ENCODE measurements at regions of chr12 and their contacts with region 1.

Region 1: DNA sequence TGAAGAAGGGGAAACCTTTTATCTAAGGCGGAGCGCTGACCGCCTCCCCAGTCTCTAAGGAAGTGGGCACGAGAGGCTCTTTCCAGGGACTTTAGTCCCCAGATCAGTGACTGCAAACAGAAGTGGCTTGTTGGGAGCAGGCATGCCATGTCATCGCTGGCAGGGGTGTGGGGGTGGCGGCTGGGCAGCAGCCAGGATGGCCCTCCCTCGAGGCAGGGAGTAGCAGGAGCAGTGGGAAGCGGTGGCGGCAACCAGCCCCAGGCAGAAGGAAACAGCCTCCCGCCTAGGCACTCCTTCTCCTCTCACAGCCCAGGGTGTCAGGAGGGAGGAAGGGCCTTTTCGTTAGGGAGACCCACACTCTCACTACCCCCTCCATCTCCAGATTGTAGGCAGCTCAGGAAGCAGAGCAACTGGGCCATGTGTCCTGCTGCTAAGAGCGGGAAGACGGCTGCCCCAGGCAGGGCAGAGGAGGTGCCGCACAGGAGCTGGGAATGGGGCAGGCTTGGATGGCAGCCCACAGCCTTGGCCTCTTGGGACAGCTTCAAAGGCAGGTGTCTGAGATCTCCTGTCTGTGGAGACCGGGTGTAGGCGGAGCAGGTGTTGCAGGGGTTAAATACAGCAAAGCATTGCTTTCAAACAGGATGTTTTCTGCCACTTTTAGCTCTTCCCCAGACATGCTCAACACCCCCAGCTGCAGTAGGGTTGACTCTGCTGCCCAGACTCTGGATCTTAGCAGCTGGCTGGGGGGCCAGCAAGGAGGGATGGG is 21.8 kb downstream of the VDR start:
- DNase-seq: peak; percentile 63
- ATAC-seq: peak; percentile 51
- H3K4me3 Mint-ChIP-seq: peak overlapping the region; percentile 73
- H3K27ac Mint-ChIP-seq: peak overlapping the region; percentile 91
- H3K4me1 Mint-ChIP-seq: peaks cover 71% of the 10 kb centered on the region
- H3K27me3 Mint-ChIP-seq: no peaks in the 10 kb centered on the region

Region 2: DNA sequence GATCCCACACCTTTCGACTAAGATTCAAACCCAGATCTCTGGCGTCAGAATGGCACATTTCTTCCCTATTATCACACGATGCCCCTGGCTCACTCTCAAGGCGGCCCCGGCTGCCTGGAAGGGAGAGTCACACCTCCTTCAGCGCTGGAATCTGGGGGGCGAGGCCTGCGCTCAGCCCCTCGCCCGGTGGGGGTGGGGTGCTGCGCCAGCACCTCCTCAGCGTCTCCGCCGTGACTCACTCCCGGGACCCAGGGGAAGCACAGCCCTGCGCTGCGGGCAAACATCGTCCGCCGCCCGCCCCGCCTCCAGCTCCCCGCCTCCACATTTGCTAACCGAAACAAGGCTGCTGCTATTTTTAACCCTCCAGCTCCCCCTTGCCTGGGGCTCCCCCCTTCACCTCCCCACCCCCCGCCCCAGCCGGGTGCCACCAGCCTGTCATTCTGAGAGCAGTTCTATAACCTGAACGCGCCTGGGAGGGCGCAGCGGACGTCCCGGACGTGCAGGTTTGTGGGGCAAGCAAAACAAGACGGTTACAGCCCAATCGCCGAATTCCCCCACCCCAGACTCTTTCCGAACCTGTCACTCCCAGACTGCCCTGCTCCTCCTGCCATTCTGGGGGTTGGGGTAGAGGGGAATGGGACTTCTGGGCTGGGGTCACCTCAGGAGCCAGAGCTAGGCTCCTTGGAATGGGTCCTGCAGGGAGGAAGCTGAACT is 70.0 kb before region 1 on chr12:
- CTCF ChIA-PET with region 1: interaction called, 15 read pairs
- POLR2A ChIA-PET with region 1: interaction called, 13 read pairs
- DNase-seq: peak; percentile 96
- ATAC-seq: peak; percentile 61
- H3K4me3 Mint-ChIP-seq: peak overlapping the region; percentile 90
- H3K27ac Mint-ChIP-seq: peak overlapping the region; percentile 90
- H3K4me1 Mint-ChIP-seq: peaks cover 97% of the 10 kb centered on the region
- H3K27me3 Mint-ChIP-seq: no peaks in the 10 kb centered on the region

Region 3: GRCh38 chr12:47828608-47829536 is 54.1 kb before region 1 on chr12:
- CTCF ChIA-PET with region 1: interaction called, 15 read pairs
- POLR2A ChIA-PET with region 1: interaction called, 4 read pairs
- DNase-seq: no peak
- ATAC-seq: no peak
- H3K4me3 Mint-ChIP-seq: no peak overlapping the region
- H3K27ac Mint-ChIP-seq: peak overlapping the region; percentile 71
- H3K4me1 Mint-ChIP-seq: peaks cover 90% of the 10 kb centered on the region
- H3K27me3 Mint-ChIP-seq: no peaks in the 10 kb centered on the region

Region 4: GRCh38 chr12:47863467-47863866 is 19.5 kb before region 1 on chr12:
- CTCF ChIA-PET with region 1: interaction called, 58 read pairs
- POLR2A ChIA-PET with region 1: interaction called, 5 read pairs
- DNase-seq: no peak
- ATAC-seq: no peak
- H3K4me3 Mint-ChIP-seq: no peak overlapping the region
- H3K27ac Mint-ChIP-seq: no peak overlapping the region
- H3K4me1 Mint-ChIP-seq: peaks cover 46% of the 10 kb centered on the region
- H3K27me3 Mint-ChIP-seq: no peaks in the 10 kb centered on the region

Region 5: DNA sequence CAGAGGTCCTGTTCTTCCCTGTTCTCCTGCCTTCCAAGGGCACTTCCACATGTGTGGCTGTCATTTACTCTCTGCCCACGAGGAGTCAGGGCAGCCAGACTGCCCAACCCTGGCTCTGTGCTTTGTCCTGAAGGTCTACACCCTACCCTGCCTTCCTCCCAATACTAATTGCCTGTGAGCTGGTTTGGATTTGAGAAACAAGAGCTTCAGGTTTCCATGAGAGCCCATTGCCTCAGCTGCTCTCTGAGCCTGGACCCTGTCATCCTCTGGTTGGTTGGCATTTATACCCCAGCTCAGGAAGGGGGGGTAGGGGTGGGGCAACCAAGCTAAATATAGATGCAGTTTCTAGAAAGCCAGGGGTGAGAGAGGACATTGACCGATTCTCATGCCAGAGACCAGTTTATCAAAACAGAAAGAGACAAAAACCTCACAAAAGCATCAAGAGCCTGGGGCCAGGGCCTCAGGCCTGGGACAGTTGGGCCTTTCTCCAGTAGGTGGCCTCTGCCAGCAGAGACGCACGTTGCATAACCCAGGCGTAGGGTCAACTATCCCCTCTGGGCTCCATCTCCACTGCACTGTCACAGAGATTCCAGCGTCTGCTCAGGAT is 12.7 kb before region 1 on chr12:
- CTCF ChIA-PET with region 1: interaction called, 58 read pairs
- POLR2A ChIA-PET with region 1: interaction called, 6 read pairs
- DNase-seq: no peak
- ATAC-seq: peak; percentile 38
- H3K4me3 Mint-ChIP-seq: no peak overlapping the region
- H3K27ac Mint-ChIP-seq: peak overlapping the region; percentile 41
- H3K4me1 Mint-ChIP-seq: peaks cover 48% of the 10 kb centered on the region
- H3K27me3 Mint-ChIP-seq: no peaks in the 10 kb centered on the region

Region 6: GRCh38 chr12:47896633-47897032 is 13.7 kb after region 1 on chr12:
- CTCF ChIA-PET with region 1: interaction called, 55 read pairs
- POLR2A ChIA-PET with region 1: interaction called, 4 read pairs
- DNase-seq: no peak
- ATAC-seq: no peak
- H3K4me3 Mint-ChIP-seq: no peak overlapping the region
- H3K27ac Mint-ChIP-seq: peak overlapping the region; percentile 17
- H3K4me1 Mint-ChIP-seq: peaks cover 92% of the 10 kb centered on the region
- H3K27me3 Mint-ChIP-seq: no peaks in the 10 kb centered on the region

Region 7: GRCh38 chr12:47904713-47905310 is 21.8 kb after region 1 on chr12 and contains the start of gene VDR:
- CTCF ChIA-PET with region 1: interaction called, 55 read pairs
- POLR2A ChIA-PET with region 1: interaction called, 10 read pairs
- DNase-seq: peak; percentile 75
- ATAC-seq: peak; percentile 77
- H3K4me3 Mint-ChIP-seq: peak within 1 kb of the TSS; percentile 81
- H3K27ac Mint-ChIP-seq: peak within 1 kb of the TSS; percentile 69
- H3K4me1 Mint-ChIP-seq: peaks cover 52% of the 10 kb centered on the region
- H3K27me3 Mint-ChIP-seq: peaks cover 30% of the 10 kb centered on the region
- total RNA-seq, gene VDR: 13.2 to 14.5 TPM

Measured in activated CD8-positive, alpha-beta T cell treated with anti-CD3 and anti-CD28 coated beads, Interleukin-2, amount 10 ng/mL, durations not matched to agents 7 days and 5 days (primary cell).